MCF 10A (cell line): ENCODE measurements at regions of chr7 and their contacts with region 1.

Region 1: GRCh38 chr7:140857048-140857447 is 67.7 kb downstream of the BRAF start:
- DNase-seq: no peak
- H3K4me3 Mint-ChIP-seq: no peak overlapping the region
- H3K27ac Mint-ChIP-seq: no peak overlapping the region
- H3K4me1 Mint-ChIP-seq: no peaks in the 10 kb centered on the region
- H3K27me3 Mint-ChIP-seq: no peaks in the 10 kb centered on the region
- CTCF ChIP-seq: no peak

Region 2: DNA sequence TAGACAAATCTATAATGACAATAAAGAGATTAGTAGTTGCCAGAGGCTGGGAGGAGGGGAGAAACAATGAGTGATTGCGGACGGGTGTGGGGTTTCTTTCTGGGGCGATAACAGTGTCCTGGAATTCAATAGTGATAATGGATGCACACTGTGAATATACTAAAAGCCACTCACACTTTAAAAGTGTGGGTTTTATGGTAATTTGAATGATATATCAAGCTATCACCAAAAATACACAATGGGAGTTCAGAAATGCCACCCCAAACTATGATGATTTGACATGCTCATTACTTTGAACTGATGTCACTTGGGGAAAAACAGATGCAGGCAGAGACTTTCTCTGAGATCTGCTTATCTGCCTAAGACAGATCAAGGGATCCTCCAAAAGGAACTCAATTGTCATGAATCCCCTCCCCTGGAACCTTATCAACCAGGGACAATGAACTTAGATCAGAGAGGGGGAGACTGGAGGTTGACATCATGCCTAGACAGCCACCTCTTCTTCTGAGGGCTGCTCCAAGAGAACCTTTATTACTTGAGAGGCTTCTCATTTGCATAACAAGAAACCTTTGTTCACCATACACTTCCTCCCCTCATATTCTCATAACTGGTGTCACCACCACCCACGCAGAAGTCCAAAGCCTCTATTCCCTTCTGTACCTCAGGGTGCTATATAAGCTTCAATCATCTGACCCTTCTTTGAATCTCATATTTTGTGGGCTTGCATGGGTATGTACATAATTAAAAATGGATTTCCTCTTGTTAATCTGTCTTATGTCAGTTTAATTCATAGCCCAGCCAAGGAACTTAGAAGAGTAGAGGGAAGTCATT is 1732.7 kb before region 1 on chr7:
- CTCF ChIA-PET with region 1: no interaction called
- POLR2A ChIA-PET with region 1: no interaction called
- intact Hi-C with region 1: loop called (anchors 10 kb)
- DNase-seq: no peak
- H3K4me3 Mint-ChIP-seq: no peak overlapping the region
- H3K27ac Mint-ChIP-seq: no peak overlapping the region
- H3K4me1 Mint-ChIP-seq: no peaks in the 10 kb centered on the region
- H3K27me3 Mint-ChIP-seq: peaks cover 49% of the 10 kb centered on the region
- CTCF ChIP-seq: no peak